ENCODE measurements at regions of chr7 and their contacts with region 1.

Region 1: DNA sequence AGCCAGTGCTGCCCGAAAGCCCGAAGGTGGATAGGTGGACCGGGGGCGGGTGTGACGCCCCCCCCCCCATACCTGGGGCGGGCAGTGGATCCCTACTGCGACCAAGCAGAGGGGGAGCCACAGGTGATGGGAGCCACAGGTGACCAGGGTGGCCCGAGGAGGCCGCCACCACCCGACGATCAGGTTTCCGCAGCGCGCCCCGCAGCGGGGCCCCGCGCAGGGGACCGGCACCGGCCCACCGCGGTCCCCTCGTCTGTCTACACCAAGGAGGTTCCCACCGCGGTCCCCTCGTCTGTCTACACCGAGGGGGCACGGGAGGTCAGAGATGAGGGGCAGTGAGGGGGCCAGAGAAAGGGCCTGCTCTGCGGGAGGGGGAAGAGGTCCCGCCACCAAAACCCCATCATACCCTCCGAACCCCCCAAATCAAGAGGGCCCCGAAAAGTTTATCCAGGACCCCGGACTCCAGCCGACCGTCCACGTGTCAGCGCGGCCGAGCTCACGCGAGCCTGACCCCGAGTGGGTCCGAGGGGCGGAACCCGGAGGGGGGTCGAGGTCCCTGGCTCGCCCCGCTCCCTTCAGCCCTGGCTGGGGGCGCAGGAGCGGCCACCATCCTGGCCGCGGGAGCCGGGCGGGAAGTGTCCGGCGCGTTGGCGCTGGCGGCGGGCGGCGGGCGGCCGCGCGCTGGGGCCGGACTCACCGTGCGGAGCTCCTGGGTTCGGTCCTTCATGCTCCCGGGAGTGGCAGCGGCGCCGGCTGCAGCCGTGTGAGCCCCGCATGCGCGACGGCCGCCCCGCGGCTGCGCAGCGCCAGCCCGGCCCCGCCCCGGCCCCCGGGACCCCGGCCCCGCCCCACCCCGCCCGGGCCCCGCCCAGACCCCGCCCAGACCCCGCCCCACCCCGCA is at the start of gene STX1A:
- DNase-seq: peak; percentile 40
- ATAC-seq: peak; percentile 67
- H3K4me3 ChIP-seq: peak within 1 kb of the TSS; percentile 76 to 87 (median 87)
- H3K27ac ChIP-seq: no peak within 1 kb of the TSS
- H3K4me1 ChIP-seq: peaks cover 47% of the 10 kb centered on the region
- H3K27me3 ChIP-seq: peaks cover 0 to 1% of the 10 kb centered on the region in 2 experiments; a peak in 1 of 5 replicates
- CTCF ChIP-seq: no peak
- EP300 ChIP-seq: no peak
- POLR2A ChIP-seq: peak in 1 of 2 experiments; percentile 67; a peak in 1 of 4 replicates
- RAD21 ChIP-seq: 0 out of 2 replicates have a peak, but pooled peaks have one; percentile 24
- total RNA-seq, gene STX1A: 2.9 and 6.1 TPM in 2 replicates

Region 2: DNA sequence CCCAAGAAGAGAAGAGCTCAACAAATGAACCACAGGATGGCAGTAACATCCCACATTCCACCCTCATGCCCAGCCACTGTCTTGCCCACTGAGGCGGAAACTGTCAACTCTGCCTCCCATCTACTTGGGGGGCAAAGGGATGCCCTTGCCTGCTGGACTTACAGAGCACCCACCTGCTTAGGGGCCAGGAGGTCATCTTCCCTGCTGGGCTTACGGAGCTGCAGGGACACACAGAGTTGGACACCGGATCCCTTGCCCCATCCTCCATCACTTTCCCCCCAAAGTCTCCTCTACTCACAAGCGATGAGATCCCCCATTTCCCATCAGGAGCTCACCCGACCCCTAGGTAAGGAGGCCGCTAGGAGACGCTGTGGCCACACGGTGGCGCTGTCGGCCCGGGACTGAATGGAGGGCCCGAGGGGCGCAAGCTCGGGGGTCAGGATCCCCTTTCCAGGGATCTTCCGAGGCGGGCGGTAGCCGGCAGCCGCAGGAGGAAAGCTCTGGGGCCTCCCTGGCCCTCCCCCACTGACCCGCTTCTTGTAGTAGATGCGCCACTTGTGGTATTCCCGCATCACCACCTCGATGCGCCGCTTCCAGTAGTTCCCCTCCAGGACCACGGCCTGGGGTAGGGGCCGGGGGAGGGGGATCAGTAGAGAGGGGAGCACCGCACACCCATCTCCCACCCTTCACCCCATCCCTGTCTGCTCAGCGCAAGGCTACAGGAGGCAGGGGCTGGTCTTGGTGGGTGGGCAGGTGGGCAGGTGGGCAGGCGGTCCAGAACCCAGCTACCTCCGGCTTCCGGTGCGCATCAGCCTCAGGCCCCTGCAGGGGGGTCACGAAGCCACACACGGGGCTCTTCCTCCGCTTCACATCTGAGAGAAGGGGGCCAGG is 112.1 kb before region 1 on chr7:
- CTCF ChIA-PET with region 1: no interaction called
- POLR2A ChIA-PET with region 1: interaction called, 12 read pairs
- in situ Hi-C with region 1: loop called (anchors 5 kb)
- intact Hi-C with region 1: no loop called
- DNase-seq: peak; percentile 33
- ATAC-seq: peak; percentile 40
- H3K4me3 ChIP-seq: no peak overlapping the region
- H3K27ac ChIP-seq: no peak overlapping the region
- H3K4me1 ChIP-seq: peaks cover 42% of the 10 kb centered on the region
- H3K27me3 ChIP-seq: no peaks in the 10 kb centered on the region
- CTCF ChIP-seq: peak; percentile 91
- EP300 ChIP-seq: no peak
- POLR2A ChIP-seq: peak in 1 of 2 experiments; percentile 25; a peak in 2 of 4 replicates
- RAD21 ChIP-seq: peak; percentile 88

Region 3: DNA sequence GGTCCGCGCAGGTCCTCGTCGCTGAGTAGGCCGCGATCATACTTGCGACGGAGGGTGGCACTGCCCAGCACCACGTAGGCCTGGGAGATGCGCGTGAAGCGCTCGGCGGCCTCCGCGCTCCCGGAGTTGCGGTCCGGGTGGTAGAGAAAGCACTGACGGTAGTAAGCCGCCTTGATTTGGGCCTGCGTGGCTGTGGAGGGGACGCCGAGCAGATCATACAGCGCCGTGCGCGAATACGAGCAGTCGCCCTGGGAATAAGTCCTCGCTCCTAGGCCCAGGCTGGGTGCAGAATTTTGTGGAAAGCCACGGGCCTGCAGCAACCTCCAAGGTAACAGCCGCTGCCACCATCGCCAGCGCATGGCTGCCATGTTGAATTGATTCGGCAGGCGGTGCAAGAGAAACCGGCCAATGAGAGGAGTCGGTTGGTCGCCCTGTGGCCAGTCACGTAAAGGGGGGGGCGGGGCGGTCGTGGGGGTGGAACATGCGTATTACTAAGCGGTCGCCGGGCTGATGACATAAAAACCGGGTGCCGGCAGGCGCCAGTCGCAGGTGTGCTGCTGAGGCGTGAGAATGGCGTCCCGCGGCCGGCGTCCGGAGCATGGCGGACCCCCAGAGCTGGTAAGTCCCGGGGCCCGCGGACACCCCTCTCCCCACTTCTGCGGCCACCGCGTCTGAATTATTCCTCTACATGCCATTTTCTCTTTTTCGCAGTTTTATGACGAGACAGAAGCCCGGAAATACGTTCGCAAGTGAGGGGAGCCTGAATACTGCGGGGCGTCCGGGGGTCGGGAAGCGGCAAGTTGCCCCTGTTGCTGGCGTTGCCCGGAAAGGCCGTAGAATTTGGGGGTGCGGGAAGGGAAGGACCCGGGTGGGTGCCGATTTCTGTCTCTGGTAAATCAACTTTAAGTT is 35.8 kb before region 1 on chr7 and contains the starts of genes BUD23 and DNAJC30:
- CTCF ChIA-PET with region 1: no interaction called
- POLR2A ChIA-PET with region 1: interaction called, 9 read pairs
- in situ Hi-C with region 1: no loop called
- intact Hi-C with region 1: loop called (anchors 5 kb)
- DNase-seq: peak; percentile 91
- ATAC-seq: peak; percentile 92
- H3K4me3 ChIP-seq: peak within 1 kb of the TSS; percentile 91 to 94 (median 92)
- H3K27ac ChIP-seq: peak within 1 kb of the TSS; percentile 75
- H3K4me1 ChIP-seq: peaks cover 39% of the 10 kb centered on the region
- H3K27me3 ChIP-seq: no peaks in the 10 kb centered on the region; a peak in 1 of 5 replicates
- CTCF ChIP-seq: no peak
- EP300 ChIP-seq: no peak
- POLR2A ChIP-seq: peak; percentile 89 to 90
- RAD21 ChIP-seq: no peak; the same call in 1 of the 2 replicates
- total RNA-seq, gene BUD23: 37.5 and 47.5 TPM in 2 replicates
- total RNA-seq, gene DNAJC30: 3.0 and 3.3 TPM in 2 replicates

Region 4: DNA sequence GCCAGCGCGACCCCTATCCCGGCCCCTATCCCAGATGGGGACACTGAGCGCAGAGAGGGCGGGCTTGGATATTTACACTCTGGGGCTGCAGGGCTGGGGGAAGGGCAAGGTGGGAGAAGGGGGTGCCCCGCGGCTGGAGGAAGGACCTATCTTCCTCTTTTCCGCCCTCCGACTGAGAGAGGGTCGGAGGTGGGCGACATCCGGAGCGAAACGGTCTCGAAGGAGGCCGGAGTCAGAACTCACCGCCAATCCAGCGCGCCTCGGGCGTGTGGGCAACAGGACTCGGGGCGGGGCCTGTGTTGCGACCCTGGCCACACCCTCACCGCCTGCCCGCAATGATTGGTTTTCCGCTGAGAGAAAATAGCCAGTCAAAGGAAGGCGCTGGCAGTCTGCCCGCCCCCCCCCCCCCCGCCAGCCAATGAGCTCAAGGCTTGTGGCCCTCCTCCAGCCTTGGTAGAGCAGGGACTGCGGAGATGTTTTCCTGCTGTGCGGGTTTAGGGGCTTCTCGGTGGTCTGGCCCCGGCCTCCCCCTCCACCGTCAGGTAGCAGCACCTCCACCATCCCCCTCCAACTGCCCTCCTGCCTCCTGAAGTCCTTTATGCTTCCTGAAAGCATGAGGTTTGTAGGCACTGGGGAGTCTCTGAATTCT is 123.2 kb after region 1 on chr7 and contains the start of gene METTL27:
- CTCF ChIA-PET with region 1: no interaction called
- POLR2A ChIA-PET with region 1: no interaction called
- in situ Hi-C with region 1: no loop called
- intact Hi-C with region 1: no loop called
- DNase-seq: peak; percentile 86
- ATAC-seq: peak; percentile 94
- H3K4me3 ChIP-seq: peak within 1 kb of the TSS; percentile 75 to 83 (median 77)
- H3K27ac ChIP-seq: peak within 1 kb of the TSS; percentile 25
- H3K4me1 ChIP-seq: peaks cover 48% of the 10 kb centered on the region
- H3K27me3 ChIP-seq: peaks cover 0 to 3% of the 10 kb centered on the region in 2 experiments; a peak in 1 of 5 replicates
- CTCF ChIP-seq: no peak
- EP300 ChIP-seq: no peak
- POLR2A ChIP-seq: peak; percentile 53 to 88; a peak in 3 of 4 replicates
- RAD21 ChIP-seq: no peak
- total RNA-seq, gene METTL27: 1.2 and 2.0 TPM in 2 replicates